B cell (primary cell): ENCODE measurements at regions of chr17 and their contacts with region 1.

Region 1: GRCh38 chr17:2149934-2150333 is 95.0 kb downstream of the HIC1 start:
- DNase-seq: no peak
- ATAC-seq: no peak
- H3K4me3 ChIP-seq: no peak overlapping the region
- H3K4me3 Mint-ChIP-seq: no peak overlapping the region
- H3K27ac ChIP-seq: no peak overlapping the region
- H3K27ac Mint-ChIP-seq: no peak overlapping the region
- H3K4me1 ChIP-seq: no peaks in the 10 kb centered on the region
- H3K4me1 Mint-ChIP-seq: peaks cover 5% of the 10 kb centered on the region
- H3K27me3 ChIP-seq: no peaks in the 10 kb centered on the region
- H3K27me3 Mint-ChIP-seq: no peaks in the 10 kb centered on the region
- CTCF ChIP-seq: no peak

Region 2: GRCh38 chr17:1275962-1276736 is 873.8 kb before region 1 on chr17:
- CTCF ChIA-PET with region 1: no interaction called
- POLR2A ChIA-PET with region 1: interaction called, 14 read pairs
- intact Hi-C with region 1: no loop called
- DNase-seq: peak; percentile 79
- ATAC-seq: peak; percentile 85
- H3K4me3 ChIP-seq: no peak overlapping the region
- H3K4me3 Mint-ChIP-seq: peak overlapping the region; percentile 47
- H3K27ac ChIP-seq: no peak overlapping the region
- H3K27ac Mint-ChIP-seq: no peak overlapping the region
- H3K4me1 ChIP-seq: peaks cover 7 to 16% of the 10 kb centered on the region in 2 donors
- H3K4me1 Mint-ChIP-seq: peaks cover 18% of the 10 kb centered on the region
- H3K27me3 ChIP-seq: peaks cover 0 to 16% (median 2%) of the 10 kb centered on the region in 4 experiments
- H3K27me3 Mint-ChIP-seq: peaks cover 13% of the 10 kb centered on the region
- CTCF ChIP-seq: peak; percentile 81

Region 3: GRCh38 chr17:2192367-2193057 is 42.6 kb after region 1 on chr17:
- CTCF ChIA-PET with region 1: no interaction called
- POLR2A ChIA-PET with region 1: no interaction called
- intact Hi-C with region 1: no loop called
- DNase-seq: no peak
- ATAC-seq: peak; percentile 31
- H3K4me3 ChIP-seq: no peak overlapping the region
- H3K4me3 Mint-ChIP-seq: no peak overlapping the region
- H3K27ac ChIP-seq: peak overlapping the region in 1 of 2 donors; percentile 8
- H3K27ac Mint-ChIP-seq: no peak overlapping the region
- H3K4me1 ChIP-seq: peaks cover 6 to 15% of the 10 kb centered on the region in 2 donors
- H3K4me1 Mint-ChIP-seq: peaks cover 24% of the 10 kb centered on the region
- H3K27me3 ChIP-seq: no peaks in the 10 kb centered on the region
- H3K27me3 Mint-ChIP-seq: no peaks in the 10 kb centered on the region
- CTCF ChIP-seq: no peak

Region 4: DNA sequence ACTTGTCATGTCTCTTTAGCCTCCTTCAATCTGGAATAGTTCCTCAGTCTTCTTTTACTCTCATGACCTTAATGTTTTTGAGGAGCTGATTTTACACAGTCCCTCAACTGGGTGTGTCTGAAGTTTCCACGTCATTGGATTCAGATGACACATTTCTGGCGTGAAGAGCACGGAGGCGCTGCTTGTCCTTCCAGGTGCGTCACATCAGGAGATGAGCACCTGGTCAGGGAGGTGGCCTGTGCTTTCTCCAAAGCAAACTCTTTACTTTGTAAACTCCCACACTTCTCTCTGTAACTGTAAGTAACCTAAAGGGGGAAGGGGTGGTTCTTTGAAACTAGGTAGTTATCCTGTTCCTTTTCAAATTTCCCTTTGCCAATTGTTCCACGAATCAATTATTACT is 303.4 kb after region 1 on chr17:
- CTCF ChIA-PET with region 1: no interaction called
- POLR2A ChIA-PET with region 1: no interaction called
- intact Hi-C with region 1: no loop called
- DNase-seq: no peak
- ATAC-seq: no peak
- H3K4me3 ChIP-seq: no peak overlapping the region
- H3K4me3 Mint-ChIP-seq: no peak overlapping the region
- H3K27ac ChIP-seq: no peak overlapping the region
- H3K27ac Mint-ChIP-seq: peak overlapping the region; percentile 17
- H3K4me1 ChIP-seq: no peaks in the 10 kb centered on the region
- H3K4me1 Mint-ChIP-seq: no peaks in the 10 kb centered on the region
- H3K27me3 ChIP-seq: no peaks in the 10 kb centered on the region
- H3K27me3 Mint-ChIP-seq: no peaks in the 10 kb centered on the region
- CTCF ChIP-seq: no peak